ENCODE measurements at regions of chr17 and their contacts with region 1.

Region 1: GRCh38 chr17:15502369-15503112 is 35.1 kb upstream of the CDRT4 start:
- DNase-seq: peak; percentile 93
- ATAC-seq: peak; percentile 95

Region 2: DNA sequence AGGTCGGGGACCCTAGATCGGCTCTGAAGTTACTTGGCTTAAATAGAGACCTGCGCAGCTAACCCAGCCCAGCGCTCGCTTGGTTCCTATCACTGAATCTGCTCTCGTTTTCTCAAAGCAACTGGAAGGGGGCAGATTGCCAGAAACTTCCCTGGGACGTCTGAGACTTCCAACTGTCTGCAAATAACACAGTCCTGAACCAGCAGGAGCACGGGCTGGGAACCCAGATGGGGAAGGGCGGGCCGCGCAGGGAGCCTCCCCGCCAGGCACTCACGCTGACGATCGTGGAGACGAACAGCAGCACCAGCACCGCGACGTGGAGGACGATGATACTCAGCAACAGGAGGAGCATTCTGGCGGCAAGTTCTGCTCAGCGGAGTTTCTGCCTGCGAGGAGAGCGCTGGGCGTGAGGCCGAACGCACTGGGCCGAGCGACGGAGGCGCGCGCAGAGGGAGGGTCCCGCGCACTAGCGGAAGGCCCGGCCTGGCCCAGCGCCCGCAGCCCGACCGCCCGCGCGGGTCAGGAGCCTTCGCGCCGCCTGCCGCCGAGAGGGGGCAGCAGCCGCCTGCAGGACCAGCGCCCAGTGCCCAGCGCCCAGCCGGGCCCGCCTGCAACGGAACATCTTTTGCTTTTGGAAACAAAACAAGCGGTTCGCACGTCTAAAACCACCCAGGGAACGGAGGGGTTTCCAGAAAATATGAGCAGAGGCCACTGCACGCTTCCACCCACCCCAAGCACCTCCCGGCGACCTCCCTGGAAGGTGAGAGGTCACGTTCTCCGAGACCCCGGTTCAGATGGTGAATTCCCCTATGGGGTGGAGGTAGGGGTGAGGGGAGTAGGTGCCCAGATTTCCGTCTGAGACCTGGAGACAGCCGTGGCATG is 241.9 kb before region 1 on chr17:
- intact Hi-C with region 1: loop called (anchors 1 to 2 kb)
- DNase-seq: peak; percentile 92
- ATAC-seq: peak; percentile 74 to 77

Region 3: GRCh38 chr17:15398736-15399331 is 103.7 kb before region 1 on chr17:
- intact Hi-C with region 1: loop called in 1 of 2 experiments (anchors 5 kb)
- DNase-seq: peak; percentile 49
- ATAC-seq: peak; percentile 79 to 86

Region 4: GRCh38 chr17:15436473-15437302 is 65.9 kb before region 1 on chr17:
- intact Hi-C with region 1: loop called in 1 of 2 experiments (anchors 5 kb)
- DNase-seq: peak; percentile 84
- ATAC-seq: peak; percentile 23 to 66

Region 5: GRCh38 chr17:15456972-15457722 is 45.4 kb before region 1 on chr17:
- intact Hi-C with region 1: no loop called
- DNase-seq: peak; percentile 53
- ATAC-seq: peak; percentile 68 to 79

Measured in left cardiac atrium (tissue), 4 donors.